Posterior vena cava (tissue), 2 donors: ENCODE measurements at regions of chr12 and their contacts with region 1.

Region 1: DNA sequence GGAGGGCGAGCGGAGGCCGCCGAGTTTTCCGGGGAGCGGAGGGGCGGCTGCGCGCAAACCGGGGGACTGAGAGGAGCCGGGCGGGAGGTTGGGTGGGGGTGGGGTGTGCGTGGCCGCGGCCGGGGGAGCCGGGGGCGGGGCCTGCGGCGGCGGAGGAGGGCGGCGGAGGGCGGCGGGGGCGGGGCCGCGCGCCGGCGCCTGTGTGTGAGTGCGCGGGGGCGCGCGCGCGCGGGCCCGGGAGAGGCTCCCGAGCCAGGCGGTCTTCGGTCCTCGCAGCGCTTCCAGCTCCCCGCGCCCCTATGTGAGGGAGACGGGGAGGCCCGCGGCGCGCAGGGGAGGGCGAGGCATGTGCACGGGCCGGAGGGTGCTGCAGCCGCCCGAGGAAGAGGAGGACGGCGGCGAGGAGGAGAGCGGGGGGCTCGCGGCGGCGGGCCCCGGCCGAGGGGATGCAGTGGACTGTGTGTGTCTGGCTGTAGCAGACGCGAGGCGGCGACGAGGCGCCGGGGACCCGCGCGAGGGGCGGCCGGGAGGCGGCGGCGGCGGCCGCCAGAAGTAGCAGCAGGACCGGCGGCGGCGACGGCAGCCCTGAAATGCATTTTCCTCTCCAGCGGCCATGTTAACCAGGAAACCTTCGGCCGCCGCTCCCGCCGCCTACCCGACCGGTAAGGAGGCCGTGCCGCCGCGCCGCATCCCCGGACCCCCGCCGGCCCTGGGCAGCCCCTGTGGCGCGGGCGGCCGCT is at the start of gene DYRK2:
- DNase-seq: peak; percentile 93
- total RNA-seq, gene DYRK2: 44.3 to 47.8 TPM

Region 2: DNA sequence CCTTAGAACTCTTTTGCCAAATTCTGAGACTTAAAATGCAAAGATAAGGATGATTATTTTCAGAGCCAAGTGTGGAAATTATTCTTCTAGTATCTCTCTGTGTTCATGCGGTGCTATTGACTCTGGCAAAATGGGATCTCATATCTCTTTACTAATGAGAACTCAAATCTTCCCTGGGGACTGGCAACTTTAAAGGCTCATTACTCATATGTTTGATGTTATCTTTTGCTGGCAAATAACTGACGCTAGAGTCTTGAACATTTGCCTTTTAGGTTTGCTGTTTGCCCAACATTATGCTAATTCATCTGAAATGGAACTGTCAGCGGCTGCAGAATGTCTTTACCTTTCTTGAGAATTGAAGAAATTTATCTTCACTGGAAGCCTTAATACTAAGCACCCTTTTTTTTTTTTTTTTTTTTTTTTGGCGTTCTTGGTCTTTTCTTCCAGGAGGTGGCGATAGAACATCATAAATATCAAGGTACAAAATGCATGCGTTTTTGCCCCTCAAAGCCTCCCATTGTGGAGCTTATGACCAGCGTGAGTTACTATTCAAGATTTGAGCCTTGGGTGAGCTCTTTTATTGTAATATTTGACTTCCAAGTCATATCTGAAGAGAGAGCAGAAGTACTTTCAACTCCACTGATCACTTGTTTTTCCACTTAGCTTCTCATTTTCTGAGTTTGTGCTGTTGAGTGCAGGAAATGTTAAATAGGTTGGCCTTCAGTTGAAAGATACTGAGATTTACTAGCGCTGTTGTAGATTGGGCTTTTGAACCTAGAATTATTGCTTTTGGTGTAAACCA is 292.9 kb before region 1 on chr12:
- intact Hi-C with region 1: loop called (anchors 5 kb)
- DNase-seq: no peak

Region 3: DNA sequence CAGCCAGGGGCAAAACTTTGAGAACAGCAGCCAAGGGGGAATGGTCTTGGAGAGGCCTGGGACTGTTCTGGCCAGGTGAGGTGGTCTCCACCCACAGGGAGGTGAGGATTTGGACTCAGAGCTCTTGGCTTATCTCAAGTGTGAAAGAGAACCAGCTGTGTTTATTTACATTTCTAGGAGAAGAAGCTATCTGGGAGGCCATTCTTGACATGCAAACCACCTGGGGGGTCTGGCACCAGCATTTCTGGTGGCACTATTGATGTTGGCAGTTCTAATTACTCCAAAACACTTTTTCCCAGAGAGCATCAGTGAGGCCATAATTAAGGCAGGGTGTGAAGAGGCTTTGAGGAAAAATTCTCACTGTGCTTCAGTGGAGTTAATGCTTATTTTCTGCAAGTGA is 284.5 kb before region 1 on chr12:
- intact Hi-C with region 1: loop called (anchors 5 kb)
- DNase-seq: no peak

Region 4: GRCh38 chr12:67433385-67434175 is 215.1 kb before region 1 on chr12:
- intact Hi-C with region 1: loop called in 1 of 2 experiments (anchors 10 kb)
- DNase-seq: no peak

Region 5: GRCh38 chr12:67457778-67458177 is 190.9 kb before region 1 on chr12:
- intact Hi-C with region 1: loop called in 1 of 2 experiments (anchors 10 kb)
- DNase-seq: no peak

Region 6: GRCh38 chr12:67797185-67797741 is 148.6 kb after region 1 on chr12:
- intact Hi-C with region 1: loop called in 1 of 2 experiments (anchors 10 kb)
- DNase-seq: no peak

Region 7: DNA sequence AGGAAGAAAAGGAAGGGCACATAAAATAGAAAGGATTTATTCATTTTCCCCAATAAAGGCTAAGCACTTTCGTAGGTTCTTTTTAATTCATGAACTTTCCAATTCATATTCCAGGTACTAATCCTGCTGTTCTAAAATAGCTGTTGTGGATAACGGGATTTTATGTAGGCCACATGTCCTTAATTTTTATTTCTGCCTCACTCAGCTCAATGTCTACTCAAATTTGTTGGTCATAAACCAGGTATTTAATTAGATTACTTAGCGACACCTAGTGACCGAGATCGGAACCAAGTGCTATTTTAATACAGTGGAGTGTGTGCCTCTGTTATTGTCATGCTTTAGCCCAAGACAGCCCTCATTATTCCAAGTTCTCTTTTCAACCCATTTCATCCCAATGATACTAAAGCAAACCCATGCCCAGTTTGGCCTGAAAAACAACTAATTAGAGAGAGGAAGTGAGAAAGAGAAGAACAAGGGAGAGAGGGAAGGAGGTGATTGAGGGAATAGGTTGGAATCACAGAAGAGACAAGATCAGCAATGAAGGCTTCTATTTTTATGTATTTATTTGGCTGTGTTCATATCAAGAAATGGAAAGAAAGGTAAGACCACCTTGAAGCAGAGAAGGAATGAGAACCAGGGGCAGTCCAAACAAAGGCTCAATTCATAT is 294.7 kb after region 1 on chr12:
- intact Hi-C with region 1: loop called in 1 of 2 experiments (anchors 5 kb)
- DNase-seq: no peak